ENCODE measurements at regions of chr3 and their contacts with region 1.

Region 1: DNA sequence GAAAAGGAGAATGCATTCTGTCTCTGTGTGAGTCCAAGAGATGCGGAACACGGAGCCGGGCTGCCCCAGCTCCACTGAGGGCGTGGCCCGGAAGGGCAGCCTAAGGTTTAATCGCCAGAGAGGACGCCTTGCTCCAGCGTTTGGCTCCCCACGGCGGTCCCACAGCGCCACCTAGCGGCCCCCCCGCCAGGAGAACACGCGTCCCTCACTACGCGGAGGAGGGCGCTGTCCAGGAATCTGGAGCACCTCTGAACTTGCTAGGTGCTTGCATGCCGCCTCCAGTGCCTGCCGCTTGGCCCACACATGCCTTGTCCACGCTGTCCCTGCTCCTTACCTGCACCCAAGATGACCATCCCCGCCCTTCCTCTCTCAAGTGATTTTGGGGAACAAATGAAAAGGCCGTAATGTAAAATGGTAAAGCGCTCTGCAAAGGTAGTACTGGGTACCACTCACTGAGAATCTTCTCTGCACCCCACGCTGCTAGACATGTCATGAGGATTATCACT is 14.4 kb upstream of the MRPS22 start:
- DNase-seq: peak; percentile 91
- H3K4me3 ChIP-seq: 0 out of 2 replicates have a peak overlapping the region, but pooled peaks have one; percentile 30
- H3K27ac ChIP-seq: no peak overlapping the region
- H3K4me1 ChIP-seq: 0 out of 2 replicates have a peak, but pooled peaks cover 3% of the 10 kb centered on the region
- H3K27me3 ChIP-seq: no peaks in the 10 kb centered on the region; the same call in 1 of the 2 replicates

Region 2: GRCh38 chr3:138256022-138256421 is 1073.4 kb before region 1 on chr3:
- in situ Hi-C with region 1: no loop called
- DNase-seq: no peak
- H3K4me3 ChIP-seq: no peak overlapping the region
- H3K27ac ChIP-seq: no peak overlapping the region
- H3K4me1 ChIP-seq: no peaks in the 10 kb centered on the region
- H3K27me3 ChIP-seq: no peaks in the 10 kb centered on the region

Region 3: GRCh38 chr3:138717348-138717747 is 612.0 kb before region 1 on chr3:
- in situ Hi-C with region 1: loop called (anchors 25 kb)
- DNase-seq: no peak
- H3K4me3 ChIP-seq: no peak overlapping the region
- H3K27ac ChIP-seq: no peak overlapping the region
- H3K4me1 ChIP-seq: no peaks in the 10 kb centered on the region
- H3K27me3 ChIP-seq: no peaks in the 10 kb centered on the region

Region 4: GRCh38 chr3:139111392-139112229 is 217.8 kb before region 1 on chr3:
- in situ Hi-C with region 1: loop called (anchors 5 kb)
- DNase-seq: peak; percentile 76
- H3K4me3 ChIP-seq: no peak overlapping the region
- H3K27ac ChIP-seq: no peak overlapping the region
- H3K4me1 ChIP-seq: peaks cover 4% of the 10 kb centered on the region
- H3K27me3 ChIP-seq: no peaks in the 10 kb centered on the region